Activated naive CD4-positive, alpha-beta T cell treated with anti-CD3 and anti-CD28 coated beads for 36 hours (primary cell): ENCODE measurements at regions of chr16 and their contacts with region 1.

Region 1: DNA sequence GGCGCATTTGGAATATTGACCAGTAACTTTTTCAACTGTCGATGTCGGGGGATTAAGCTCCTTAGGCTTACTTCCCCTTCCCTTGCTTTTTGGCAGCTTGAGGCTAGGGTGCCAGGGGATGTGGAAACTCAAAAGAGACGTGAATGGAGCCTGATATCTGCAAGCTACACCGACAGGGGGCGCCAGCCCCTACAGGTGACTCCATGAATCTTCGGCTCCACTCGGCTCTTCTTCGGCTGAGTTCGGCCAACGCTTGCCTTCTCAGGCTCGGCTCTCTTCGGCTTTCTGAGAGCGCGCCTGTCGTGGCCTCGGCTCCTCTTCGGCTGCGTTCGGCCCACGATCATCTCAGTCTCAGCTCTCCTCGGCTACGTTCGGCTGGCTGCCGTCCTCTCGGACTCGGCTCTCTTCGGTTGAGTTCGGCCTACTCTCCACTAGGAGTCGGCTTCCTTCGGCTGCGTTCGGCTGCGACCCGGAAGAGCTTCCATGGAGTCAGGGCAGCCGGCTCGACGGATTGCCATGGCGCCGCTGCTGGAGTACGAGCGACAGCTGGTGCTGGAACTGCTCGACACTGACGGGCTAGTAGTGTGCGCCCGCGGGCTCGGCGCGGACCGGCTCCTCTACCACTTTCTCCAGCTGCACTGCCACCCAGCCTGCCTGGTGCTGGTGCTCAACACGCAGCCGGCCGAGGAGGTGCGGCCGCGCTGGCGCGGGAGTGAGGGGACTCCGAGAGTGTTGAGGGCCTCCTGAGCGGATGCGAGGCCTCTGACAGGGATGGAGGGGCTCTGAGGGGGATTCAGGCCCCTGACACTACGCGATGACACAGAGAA is at the start of gene ERCC4:
- DNase-seq: peak; percentile 100
- H3K4me3 Mint-ChIP-seq: peak within 1 kb of the TSS; percentile 91
- H3K27ac Mint-ChIP-seq: peak within 1 kb of the TSS; percentile 82
- H3K4me1 Mint-ChIP-seq: peaks cover 20% of the 10 kb centered on the region
- H3K27me3 Mint-ChIP-seq: no peaks in the 10 kb centered on the region
- total RNA-seq, gene ERCC4: 10.3 to 10.7 TPM

Region 2: DNA sequence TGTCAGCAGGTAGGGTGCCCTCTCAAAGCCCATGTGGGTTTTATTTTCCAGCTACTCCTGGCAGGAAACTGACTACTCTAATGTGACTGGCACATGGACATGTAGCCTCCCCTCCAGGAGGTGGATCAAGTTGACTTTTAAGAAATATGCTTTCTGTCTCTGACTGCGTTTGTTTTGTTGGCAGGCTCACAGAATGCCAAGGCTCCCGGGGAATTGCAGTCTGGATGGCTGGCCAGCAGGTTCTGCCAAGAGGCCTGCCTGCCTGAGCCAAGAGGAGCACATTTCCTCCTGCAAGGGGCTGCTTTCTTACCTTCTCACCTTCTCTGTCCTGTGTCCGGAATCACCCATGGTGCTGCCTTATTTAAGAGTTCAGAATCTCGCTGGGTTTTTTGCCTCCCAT is 217.3 kb before region 1 on chr16:
- CTCF ChIA-PET with region 1: no interaction called
- intact Hi-C with region 1: no loop called
- DNase-seq: no peak
- H3K4me3 Mint-ChIP-seq: no peak overlapping the region
- H3K27ac Mint-ChIP-seq: no peak overlapping the region
- H3K4me1 Mint-ChIP-seq: no peaks in the 10 kb centered on the region
- H3K27me3 Mint-ChIP-seq: no peaks in the 10 kb centered on the region

Region 3: GRCh38 chr16:13866073-13866472 is 53.8 kb before region 1 on chr16:
- CTCF ChIA-PET with region 1: interaction called, 11 read pairs
- intact Hi-C with region 1: loop called (anchors 1 kb)
- DNase-seq: peak; percentile 74
- H3K4me3 Mint-ChIP-seq: no peak overlapping the region
- H3K27ac Mint-ChIP-seq: no peak overlapping the region
- H3K4me1 Mint-ChIP-seq: no peaks in the 10 kb centered on the region
- H3K27me3 Mint-ChIP-seq: peaks cover 22% of the 10 kb centered on the region

Region 4: DNA sequence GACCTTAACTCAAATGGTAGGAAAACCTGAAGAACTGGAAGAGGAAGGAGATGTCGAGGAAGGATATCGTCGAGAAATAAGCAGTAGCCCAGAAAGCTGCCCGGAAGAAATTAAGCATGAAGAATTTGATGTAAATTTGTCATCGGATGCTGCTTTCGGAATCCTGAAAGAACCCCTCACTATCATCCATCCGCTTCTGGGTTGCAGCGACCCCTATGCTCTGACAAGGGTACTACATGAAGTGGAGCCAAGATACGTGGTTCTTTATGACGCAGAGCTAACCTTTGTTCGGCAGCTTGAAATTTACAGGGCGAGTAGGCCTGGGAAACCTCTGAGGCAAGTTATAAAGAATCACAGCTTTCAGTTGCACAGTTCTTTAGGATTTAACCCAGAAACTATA is 15.5 kb after region 1 on chr16:
- CTCF ChIA-PET with region 1: interaction called, 24 read pairs
- intact Hi-C with region 1: no loop called
- DNase-seq: peak; percentile 38
- H3K4me3 Mint-ChIP-seq: no peak overlapping the region
- H3K27ac Mint-ChIP-seq: no peak overlapping the region
- H3K4me1 Mint-ChIP-seq: peaks cover 15% of the 10 kb centered on the region
- H3K27me3 Mint-ChIP-seq: no peaks in the 10 kb centered on the region

Region 5: GRCh38 chr16:14013571-14014282 is 93.8 kb after region 1 on chr16:
- CTCF ChIA-PET with region 1: no interaction called
- intact Hi-C with region 1: no loop called
- DNase-seq: no peak
- H3K4me3 Mint-ChIP-seq: no peak overlapping the region
- H3K27ac Mint-ChIP-seq: no peak overlapping the region
- H3K4me1 Mint-ChIP-seq: peaks cover 2% of the 10 kb centered on the region
- H3K27me3 Mint-ChIP-seq: peaks cover 16% of the 10 kb centered on the region

Region 6: GRCh38 chr16:14193316-14193871 is 273.5 kb after region 1 on chr16:
- CTCF ChIA-PET with region 1: interaction called, 4 read pairs
- intact Hi-C with region 1: loop called (anchors 2 kb)
- DNase-seq: peak; percentile 64
- H3K4me3 Mint-ChIP-seq: peak overlapping the region; percentile 61
- H3K27ac Mint-ChIP-seq: peak overlapping the region; percentile 80
- H3K4me1 Mint-ChIP-seq: peaks cover 46% of the 10 kb centered on the region
- H3K27me3 Mint-ChIP-seq: no peaks in the 10 kb centered on the region

Region 7: GRCh38 chr16:14263011-14263410 is 343.1 kb after region 1 on chr16:
- CTCF ChIA-PET with region 1: no interaction called
- intact Hi-C with region 1: no loop called
- DNase-seq: no peak
- H3K4me3 Mint-ChIP-seq: no peak overlapping the region
- H3K27ac Mint-ChIP-seq: no peak overlapping the region
- H3K4me1 Mint-ChIP-seq: no peaks in the 10 kb centered on the region
- H3K27me3 Mint-ChIP-seq: no peaks in the 10 kb centered on the region

Region 8: GRCh38 chr16:14285513-14286385 is 365.9 kb after region 1 on chr16:
- CTCF ChIA-PET with region 1: interaction called, 12 read pairs
- intact Hi-C with region 1: loop called (anchors 1 kb)
- DNase-seq: peak; percentile 94
- H3K4me3 Mint-ChIP-seq: peak overlapping the region; percentile 83
- H3K27ac Mint-ChIP-seq: peak overlapping the region; percentile 76
- H3K4me1 Mint-ChIP-seq: peaks cover 8% of the 10 kb centered on the region
- H3K27me3 Mint-ChIP-seq: no peaks in the 10 kb centered on the region

Region 9: GRCh38 chr16:14364386-14365204 is 444.7 kb after region 1 on chr16:
- CTCF ChIA-PET with region 1: no interaction called
- intact Hi-C with region 1: no loop called
- DNase-seq: no peak
- H3K4me3 Mint-ChIP-seq: no peak overlapping the region
- H3K27ac Mint-ChIP-seq: no peak overlapping the region
- H3K4me1 Mint-ChIP-seq: peaks cover 2% of the 10 kb centered on the region
- H3K27me3 Mint-ChIP-seq: no peaks in the 10 kb centered on the region

Region 10: GRCh38 chr16:14529010-14529669 is 609.2 kb after region 1 on chr16:
- CTCF ChIA-PET with region 1: interaction called, 4 read pairs
- intact Hi-C with region 1: loop called (anchors 1 kb)
- DNase-seq: peak; percentile 79
- H3K4me3 Mint-ChIP-seq: no peak overlapping the region
- H3K27ac Mint-ChIP-seq: peak overlapping the region; percentile 15
- H3K4me1 Mint-ChIP-seq: peaks cover 5% of the 10 kb centered on the region
- H3K27me3 Mint-ChIP-seq: no peaks in the 10 kb centered on the region